ENCODE measurements at regions of chr16 and their contacts with region 1.

Region 1: DNA sequence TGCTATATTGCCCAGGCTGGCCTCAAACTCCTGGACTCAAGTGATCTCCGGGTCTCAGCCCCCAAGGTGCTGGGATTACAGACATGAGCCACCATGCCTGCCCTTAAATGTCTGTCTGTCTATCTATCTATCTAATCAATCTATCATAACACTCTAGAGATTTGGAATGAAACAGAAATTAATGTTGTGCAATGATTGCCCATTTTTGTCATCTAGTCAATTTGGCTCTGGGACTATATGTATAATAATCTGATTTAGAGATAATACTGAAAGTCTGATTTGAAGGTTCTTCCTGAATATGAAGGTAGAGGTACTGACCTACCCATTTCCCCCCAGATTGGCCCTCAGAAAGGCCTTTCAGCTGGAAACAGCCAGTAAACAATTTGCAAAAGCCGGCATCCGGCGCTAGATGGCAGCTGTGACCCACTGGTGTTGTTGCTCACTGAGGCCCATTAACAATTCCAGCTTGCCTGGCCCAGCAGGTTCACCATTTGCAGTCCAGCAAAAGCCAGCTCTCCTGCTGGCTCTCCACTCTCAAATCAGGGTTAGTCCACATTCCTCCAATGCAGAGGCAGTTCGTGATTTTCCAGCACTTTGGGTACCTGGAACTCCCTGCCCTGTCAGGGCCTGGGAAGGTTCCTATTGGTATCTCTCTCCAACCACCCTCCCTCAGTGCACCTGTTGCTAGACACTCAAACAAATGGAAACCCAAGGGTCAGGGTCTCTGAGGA is 22.9 kb upstream of the C16orf87 start:
- DNase-seq: peak; percentile 54 to 78 (median 66)
- H3K4me3 ChIP-seq: no peak overlapping the region
- H3K4me3 Mint-ChIP-seq: no peak overlapping the region
- H3K27ac ChIP-seq: no peak overlapping the region
- H3K27ac Mint-ChIP-seq: no peak overlapping the region
- H3K4me1 ChIP-seq: no peaks in the 10 kb centered on the region
- H3K4me1 Mint-ChIP-seq: peaks cover 6% of the 10 kb centered on the region
- H3K27me3 ChIP-seq: no peaks in the 10 kb centered on the region
- H3K27me3 Mint-ChIP-seq: no peaks in the 10 kb centered on the region
- CTCF ChIP-seq: peak; percentile 83

Region 2: GRCh38 chr16:46830902-46831647 is 22.8 kb before region 1 on chr16 and contains the start of gene C16orf87:
- intact Hi-C with region 1: no loop called
- DNase-seq: peak; percentile 89 to 93 (median 91)
- H3K4me3 ChIP-seq: peak within 1 kb of the TSS; percentile 70 to 93 (median 82)
- H3K4me3 Mint-ChIP-seq: peak within 1 kb of the TSS; percentile 97 to 99
- H3K27ac ChIP-seq: peak within 1 kb of the TSS; percentile 34 to 82
- H3K27ac Mint-ChIP-seq: peak within 1 kb of the TSS; percentile 94 to 97 (median 94)
- H3K4me1 ChIP-seq: peaks cover 11 to 21% of the 10 kb centered on the region in 2 donors
- H3K4me1 Mint-ChIP-seq: peaks cover 27% of the 10 kb centered on the region
- H3K27me3 ChIP-seq: no peaks in the 10 kb centered on the region
- H3K27me3 Mint-ChIP-seq: no peaks in the 10 kb centered on the region
- CTCF ChIP-seq: no peak
- polyA plus RNA-seq, gene C16orf87: 6.1 to 9.7 (median 7.6) TPM

Region 3: GRCh38 chr16:46884513-46885293 is 30.8 kb after region 1 on chr16:
- intact Hi-C with region 1: loop called in 1 of 2 experiments (anchors 5 kb)
- DNase-seq: no peak
- H3K4me3 ChIP-seq: peak overlapping the region; percentile 56 to 87 (median 77)
- H3K4me3 Mint-ChIP-seq: peak overlapping the region; percentile 86 to 89
- H3K27ac ChIP-seq: peak overlapping the region in 1 of 2 donors; percentile 56
- H3K27ac Mint-ChIP-seq: peak overlapping the region in 3 of 7 donors; percentile 12 to 76 (median 46)
- H3K4me1 ChIP-seq: peaks cover 18 to 31% of the 10 kb centered on the region in 2 donors
- H3K4me1 Mint-ChIP-seq: peaks cover 33% of the 10 kb centered on the region
- H3K27me3 ChIP-seq: no peaks in the 10 kb centered on the region
- H3K27me3 Mint-ChIP-seq: peaks cover 2 to 10% (median 9%) of the 10 kb centered on the region in 3 donors
- CTCF ChIP-seq: no peak

Region 4: GRCh38 chr16:46920402-46921068 is 66.7 kb after region 1 on chr16:
- intact Hi-C with region 1: no loop called
- DNase-seq: no peak
- H3K4me3 ChIP-seq: no peak overlapping the region
- H3K4me3 Mint-ChIP-seq: no peak overlapping the region
- H3K27ac ChIP-seq: no peak overlapping the region
- H3K27ac Mint-ChIP-seq: peak overlapping the region in 2 of 7 donors; percentile 29 to 43
- H3K4me1 ChIP-seq: peaks cover 29 to 30% of the 10 kb centered on the region in 2 donors
- H3K4me1 Mint-ChIP-seq: peaks cover 41% of the 10 kb centered on the region
- H3K27me3 ChIP-seq: no peaks in the 10 kb centered on the region
- H3K27me3 Mint-ChIP-seq: peaks cover 0 to 1% (median 0%) of the 10 kb centered on the region in 3 donors
- CTCF ChIP-seq: no peak